Naive thymus-derived CD4-positive, alpha-beta T cell (primary cell): ENCODE measurements at regions of chr18 and their contacts with region 1.

Region 1: GRCh38 chr18:59139371-59140298 is at the start of gene SEC11C:
- DNase-seq: peak; percentile 89 to 98 (median 98)
- ATAC-seq: peak; percentile 93
- H3K4me3 ChIP-seq: peak within 1 kb of the TSS; percentile 98
- H3K4me3 Mint-ChIP-seq: peak within 1 kb of the TSS; percentile 91 to 98 (median 96)
- H3K27ac ChIP-seq: peak within 1 kb of the TSS; percentile 98
- H3K27ac Mint-ChIP-seq: peak within 1 kb of the TSS; percentile 93 to 100 (median 100)
- H3K4me1 ChIP-seq: peaks cover 15 to 17% of the 10 kb centered on the region in 2 donors
- H3K4me1 Mint-ChIP-seq: peaks cover 19 to 48% (median 39%) of the 10 kb centered on the region in 7 donors
- H3K27me3 ChIP-seq: no peaks in the 10 kb centered on the region
- H3K27me3 Mint-ChIP-seq: peaks cover 2 to 16% (median 9%) of the 10 kb centered on the region in 5 donors
- total RNA-seq, gene SEC11C: 41.4 to 111 (median 53.8) TPM

Region 2: DNA sequence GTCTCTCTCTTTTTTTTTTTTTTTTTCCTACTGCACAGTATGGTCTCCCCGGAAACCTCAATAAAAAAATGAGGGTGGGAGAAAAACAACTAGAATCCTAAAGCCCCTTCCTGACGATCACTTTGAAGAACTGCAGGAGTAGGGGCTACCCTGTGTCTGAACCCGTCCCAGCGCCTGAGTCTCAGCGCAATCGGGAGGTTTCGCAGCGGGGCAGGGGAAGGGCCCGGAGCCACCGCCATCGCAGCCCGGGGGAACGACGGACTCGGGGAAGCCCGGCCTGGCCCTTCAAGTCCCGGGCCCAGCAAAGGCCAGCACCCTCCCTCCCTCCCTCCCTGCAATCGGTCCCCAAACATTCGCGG is 1518.4 kb before region 1 on chr18:
- CTCF ChIA-PET with region 1: no interaction called
- POLR2A ChIA-PET with region 1: no interaction called
- intact Hi-C with region 1: loop called (anchors 1 to 2 kb)
- DNase-seq: no peak
- ATAC-seq: peak; percentile 4
- H3K4me3 ChIP-seq: peak overlapping the region; percentile 84
- H3K4me3 Mint-ChIP-seq: peak overlapping the region; percentile 89 to 99 (median 96)
- H3K27ac ChIP-seq: peak overlapping the region; percentile 85
- H3K27ac Mint-ChIP-seq: peak overlapping the region; percentile 93 to 99 (median 98)
- H3K4me1 ChIP-seq: peaks cover 13 to 19% of the 10 kb centered on the region in 2 donors
- H3K4me1 Mint-ChIP-seq: peaks cover 9 to 44% (median 34%) of the 10 kb centered on the region in 7 donors
- H3K27me3 ChIP-seq: no peaks in the 10 kb centered on the region
- H3K27me3 Mint-ChIP-seq: no peaks in the 10 kb centered on the region

Region 3: GRCh38 chr18:58161659-58162058 is 978.0 kb before region 1 on chr18:
- CTCF ChIA-PET with region 1: no interaction called
- POLR2A ChIA-PET with region 1: no interaction called
- intact Hi-C with region 1: no loop called
- DNase-seq: no peak
- ATAC-seq: no peak
- H3K4me3 ChIP-seq: no peak overlapping the region
- H3K4me3 Mint-ChIP-seq: no peak overlapping the region
- H3K27ac ChIP-seq: no peak overlapping the region
- H3K27ac Mint-ChIP-seq: no peak overlapping the region
- H3K4me1 ChIP-seq: no peaks in the 10 kb centered on the region
- H3K4me1 Mint-ChIP-seq: no peaks in the 10 kb centered on the region
- H3K27me3 ChIP-seq: no peaks in the 10 kb centered on the region
- H3K27me3 Mint-ChIP-seq: peaks cover 0 to 14% (median 8%) of the 10 kb centered on the region in 5 donors

Region 4: DNA sequence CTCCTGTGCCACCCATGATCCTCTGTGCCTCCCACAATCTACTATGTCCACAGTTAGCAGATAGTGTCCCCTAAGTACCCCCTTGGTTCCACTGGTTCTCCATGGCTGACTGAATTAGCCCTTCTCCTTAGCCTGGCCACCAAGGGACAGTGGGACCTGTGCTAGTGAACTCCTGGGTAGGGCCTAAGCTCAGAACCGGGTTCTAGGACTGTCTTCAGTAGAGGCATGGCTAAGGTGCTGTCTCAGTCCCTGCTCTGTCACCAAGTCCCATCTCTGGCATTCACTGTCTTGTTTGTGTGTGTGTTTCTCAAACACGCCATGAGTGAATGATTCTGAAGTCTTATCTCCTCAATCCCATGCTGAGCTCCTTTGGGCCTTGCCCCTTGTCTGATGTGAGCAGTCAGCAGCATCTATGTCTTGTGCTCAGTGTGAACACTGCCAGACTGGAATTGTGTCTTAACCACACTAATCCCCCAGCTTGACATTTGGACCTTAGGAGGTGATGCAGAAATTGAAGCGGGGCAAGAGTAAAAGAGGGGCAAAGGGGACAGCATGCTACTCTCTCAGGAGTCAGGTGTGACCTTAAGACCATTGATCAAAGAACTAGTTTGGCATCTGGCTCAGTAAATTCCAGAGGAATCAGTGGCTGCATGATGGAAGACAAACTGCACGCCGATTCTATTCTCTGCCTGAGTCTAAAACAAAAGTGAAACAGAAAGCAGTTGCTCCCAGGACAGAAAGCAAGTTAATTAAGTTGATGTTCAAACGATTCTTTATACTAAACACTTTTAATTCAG is 701.3 kb before region 1 on chr18:
- CTCF ChIA-PET with region 1: no interaction called
- POLR2A ChIA-PET with region 1: no interaction called
- intact Hi-C with region 1: loop called in 1 of 2 experiments (anchors 1 kb)
- DNase-seq: peak in 3 of 9 donors; percentile 3 to 29 (median 23)
- ATAC-seq: no peak
- H3K4me3 ChIP-seq: peak overlapping the region; percentile 48
- H3K4me3 Mint-ChIP-seq: peak overlapping the region; percentile 60 to 90 (median 80)
- H3K27ac ChIP-seq: no peak overlapping the region
- H3K27ac Mint-ChIP-seq: peak overlapping the region; percentile 1 to 91 (median 63)
- H3K4me1 ChIP-seq: peaks cover 0 to 16% of the 10 kb centered on the region in 2 donors
- H3K4me1 Mint-ChIP-seq: peaks cover 13 to 22% (median 17%) of the 10 kb centered on the region in 7 donors
- H3K27me3 ChIP-seq: no peaks in the 10 kb centered on the region
- H3K27me3 Mint-ChIP-seq: peaks cover 0 to 13% (median 0%) of the 10 kb centered on the region in 5 donors

Region 5: GRCh38 chr18:58661423-58661822 is 478.2 kb before region 1 on chr18:
- CTCF ChIA-PET with region 1: no interaction called
- POLR2A ChIA-PET with region 1: no interaction called
- intact Hi-C with region 1: loop called in 1 of 2 experiments (anchors 1 kb)
- DNase-seq: no peak
- ATAC-seq: no peak
- H3K4me3 ChIP-seq: no peak overlapping the region
- H3K4me3 Mint-ChIP-seq: no peak overlapping the region
- H3K27ac ChIP-seq: no peak overlapping the region
- H3K27ac Mint-ChIP-seq: peak overlapping the region in 1 of 9 donors; percentile 22
- H3K4me1 ChIP-seq: peaks cover 31 to 33% of the 10 kb centered on the region in 2 donors
- H3K4me1 Mint-ChIP-seq: peaks cover 38 to 68% (median 62%) of the 10 kb centered on the region in 7 donors
- H3K27me3 ChIP-seq: no peaks in the 10 kb centered on the region
- H3K27me3 Mint-ChIP-seq: no peaks in the 10 kb centered on the region

Region 6: DNA sequence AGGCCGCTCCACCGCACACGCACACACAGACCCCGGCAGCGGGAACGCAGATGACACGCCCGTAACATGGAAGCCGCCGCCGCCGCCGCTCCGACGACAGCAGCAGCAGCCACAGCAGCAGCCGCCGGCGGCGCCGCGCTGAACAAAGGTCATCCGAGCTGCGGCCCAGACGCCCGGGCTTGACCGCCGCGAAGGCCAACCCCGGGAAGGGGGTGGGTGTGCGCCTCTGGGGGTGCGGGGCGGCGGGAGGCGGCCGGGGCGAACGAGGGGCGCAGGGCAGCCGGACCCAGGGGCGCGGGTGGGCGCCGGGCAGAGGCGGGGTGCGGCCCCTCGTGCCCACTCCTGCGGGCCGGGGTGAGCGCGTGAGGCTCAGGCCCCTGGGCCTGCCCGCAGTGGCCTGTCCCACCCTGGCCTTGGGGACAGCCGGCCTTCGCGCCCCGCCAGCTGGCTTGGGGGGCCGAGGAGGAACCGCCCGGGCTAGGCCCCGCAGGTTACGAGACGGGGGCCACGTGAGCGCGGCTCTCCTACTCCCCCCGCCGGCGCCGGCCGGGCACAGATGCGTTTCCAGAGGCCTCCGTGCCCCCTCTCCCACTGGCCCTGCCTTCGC is 276.0 kb before region 1 on chr18:
- CTCF ChIA-PET with region 1: no interaction called
- POLR2A ChIA-PET with region 1: no interaction called
- intact Hi-C with region 1: loop called in 1 of 2 experiments (anchors 2 kb)
- DNase-seq: peak in 8 of 9 donors; percentile 11 to 39 (median 24)
- ATAC-seq: peak; percentile 73
- H3K4me3 ChIP-seq: no peak overlapping the region
- H3K4me3 Mint-ChIP-seq: peak overlapping the region in 8 of 10 donors; percentile 16 to 78 (median 51)
- H3K27ac ChIP-seq: no peak overlapping the region
- H3K27ac Mint-ChIP-seq: peak overlapping the region in 1 of 9 donors; percentile 86
- H3K4me1 ChIP-seq: peaks cover 6 to 8% of the 10 kb centered on the region in 2 donors
- H3K4me1 Mint-ChIP-seq: peaks cover 4 to 22% (median 13%) of the 10 kb centered on the region in 7 donors
- H3K27me3 ChIP-seq: peaks cover 0 to 4% of the 10 kb centered on the region in 2 donors
- H3K27me3 Mint-ChIP-seq: peaks cover 51 to 87% (median 66%) of the 10 kb centered on the region in 5 donors

Region 7: GRCh38 chr18:59358712-59359575 is 219.3 kb after region 1 on chr18 and contains the start of gene LMAN1:
- CTCF ChIA-PET with region 1: no interaction called
- POLR2A ChIA-PET with region 1: no interaction called
- intact Hi-C with region 1: loop called (anchors 1 kb)
- DNase-seq: peak; percentile 73 to 98 (median 83)
- ATAC-seq: peak; percentile 97
- H3K4me3 ChIP-seq: peak within 1 kb of the TSS; percentile 81
- H3K4me3 Mint-ChIP-seq: peak within 1 kb of the TSS; percentile 88 to 99 (median 96)
- H3K27ac ChIP-seq: peak within 1 kb of the TSS; percentile 86
- H3K27ac Mint-ChIP-seq: peak within 1 kb of the TSS; percentile 90 to 98 (median 93)
- H3K4me1 ChIP-seq: peaks cover 3 to 20% of the 10 kb centered on the region in 2 donors
- H3K4me1 Mint-ChIP-seq: peaks cover 11 to 45% (median 39%) of the 10 kb centered on the region in 7 donors
- H3K27me3 ChIP-seq: no peaks in the 10 kb centered on the region
- H3K27me3 Mint-ChIP-seq: peaks cover 0 to 9% (median 0%) of the 10 kb centered on the region in 5 donors
- total RNA-seq, gene LMAN1: 34.6 to 120 (median 46.3) TPM

Region 8: DNA sequence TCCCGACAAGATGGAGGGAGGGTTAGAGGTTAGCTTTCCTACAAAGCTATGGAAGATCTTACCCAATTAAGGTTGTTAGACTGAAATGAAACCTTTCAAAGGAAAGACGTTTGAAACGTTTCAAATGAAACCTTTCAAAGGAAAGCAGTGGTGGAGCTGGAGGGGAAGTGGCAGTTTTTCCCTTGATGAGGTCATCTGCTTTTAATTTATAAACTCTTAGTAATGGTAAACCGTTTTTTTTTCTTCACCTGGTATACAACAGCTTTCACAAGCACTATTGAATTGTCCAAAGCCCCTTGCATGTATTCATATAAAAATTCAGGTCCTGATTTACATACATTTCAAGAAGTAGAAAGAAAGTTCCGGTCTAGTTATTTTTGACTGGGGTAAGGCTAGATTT is 767.5 kb after region 1 on chr18:
- CTCF ChIA-PET with region 1: no interaction called
- POLR2A ChIA-PET with region 1: no interaction called
- intact Hi-C with region 1: loop called in 1 of 2 experiments (anchors 2 kb)
- DNase-seq: no peak
- ATAC-seq: no peak
- H3K4me3 ChIP-seq: no peak overlapping the region
- H3K4me3 Mint-ChIP-seq: peak overlapping the region in 2 of 10 donors; percentile 4 to 66
- H3K27ac ChIP-seq: no peak overlapping the region
- H3K27ac Mint-ChIP-seq: peak overlapping the region in 5 of 9 donors; percentile 23 to 74 (median 60)
- H3K4me1 ChIP-seq: peaks cover 15% of the 10 kb centered on the region in 2 donors
- H3K4me1 Mint-ChIP-seq: peaks cover 28 to 57% (median 47%) of the 10 kb centered on the region in 7 donors
- H3K27me3 ChIP-seq: no peaks in the 10 kb centered on the region
- H3K27me3 Mint-ChIP-seq: no peaks in the 10 kb centered on the region